ENCODE measurements at regions of chr20 and their contacts with region 1.

Region 1: DNA sequence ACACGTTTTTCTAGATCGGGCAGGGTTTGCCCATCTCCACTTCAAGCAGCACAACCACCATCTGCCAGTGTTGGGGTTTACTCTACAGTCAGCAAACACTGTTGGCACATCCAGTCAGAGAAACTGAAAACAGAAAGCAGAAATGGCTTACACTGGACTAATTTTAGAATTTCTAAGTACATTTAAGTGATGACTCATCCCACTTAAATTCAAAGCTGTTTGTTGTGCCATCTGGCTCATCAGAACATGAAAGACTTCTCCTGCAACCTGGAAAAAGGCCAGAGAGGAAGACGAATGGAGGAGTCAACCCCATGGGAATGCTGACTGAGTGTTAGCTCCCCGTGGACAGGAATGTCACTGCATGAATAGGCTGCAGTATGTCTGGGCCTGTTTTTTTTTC is 21.8 kb downstream of the FAM209B start:
- DNase-seq: peak; percentile 95
- H3K4me3 ChIP-seq: no peak overlapping the region
- H3K27ac ChIP-seq: no peak overlapping the region
- H3K4me1 ChIP-seq: peaks cover 8% of the 10 kb centered on the region
- H3K27me3 ChIP-seq: peaks cover 12% of the 10 kb centered on the region
- CTCF ChIP-seq: no peak

Region 2: GRCh38 chr20:56069016-56069415 is 485.9 kb before region 1 on chr20:
- CTCF ChIA-PET with region 1: no interaction called
- POLR2A ChIA-PET with region 1: no interaction called
- intact Hi-C with region 1: no loop called
- DNase-seq: no peak
- H3K4me3 ChIP-seq: no peak overlapping the region
- H3K27ac ChIP-seq: no peak overlapping the region
- H3K4me1 ChIP-seq: no peaks in the 10 kb centered on the region
- H3K27me3 ChIP-seq: no peaks in the 10 kb centered on the region
- CTCF ChIP-seq: no peak

Region 3: DNA sequence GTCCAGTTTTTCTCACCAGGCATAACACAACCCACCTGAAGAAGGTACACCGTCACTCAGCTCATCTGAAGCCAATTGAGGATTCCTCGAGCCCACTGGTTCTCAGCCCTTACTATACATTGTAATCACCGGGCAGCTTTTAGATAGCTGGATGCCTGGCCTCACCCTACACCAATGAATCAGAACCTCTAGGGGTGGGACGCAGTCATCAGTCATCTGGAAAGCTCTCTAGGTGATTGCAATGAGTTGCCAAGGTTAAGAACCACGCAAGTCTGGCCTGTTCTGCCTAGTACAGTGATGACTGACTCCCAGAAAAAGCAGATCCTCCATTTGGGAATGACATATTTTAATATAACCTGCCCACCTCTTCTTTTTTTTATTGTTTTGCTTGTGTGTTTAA is 265.2 kb before region 1 on chr20:
- CTCF ChIA-PET with region 1: no interaction called
- POLR2A ChIA-PET with region 1: no interaction called
- intact Hi-C with region 1: no loop called
- DNase-seq: no peak
- H3K4me3 ChIP-seq: no peak overlapping the region
- H3K27ac ChIP-seq: no peak overlapping the region
- H3K4me1 ChIP-seq: no peaks in the 10 kb centered on the region
- H3K27me3 ChIP-seq: peaks cover 3% of the 10 kb centered on the region
- CTCF ChIP-seq: no peak

Region 4: GRCh38 chr20:56629670-56630478 is 75.0 kb after region 1 on chr20:
- CTCF ChIA-PET with region 1: no interaction called
- POLR2A ChIA-PET with region 1: no interaction called
- intact Hi-C with region 1: loop called (anchors 5 kb)
- DNase-seq: peak; percentile 49
- H3K4me3 ChIP-seq: peak overlapping the region; percentile 38
- H3K27ac ChIP-seq: no peak overlapping the region
- H3K4me1 ChIP-seq: peaks cover 13% of the 10 kb centered on the region
- H3K27me3 ChIP-seq: peaks cover 100% of the 10 kb centered on the region
- CTCF ChIP-seq: peak; percentile 57

Region 5: GRCh38 chr20:56683080-56683847 is 128.4 kb after region 1 on chr20:
- CTCF ChIA-PET with region 1: no interaction called
- POLR2A ChIA-PET with region 1: no interaction called
- intact Hi-C with region 1: no loop called
- DNase-seq: no peak
- H3K4me3 ChIP-seq: no peak overlapping the region
- H3K27ac ChIP-seq: no peak overlapping the region
- H3K4me1 ChIP-seq: no peaks in the 10 kb centered on the region
- H3K27me3 ChIP-seq: peaks cover 4% of the 10 kb centered on the region
- CTCF ChIP-seq: no peak

Region 6: GRCh38 chr20:56788040-56788983 is 233.4 kb after region 1 on chr20:
- CTCF ChIA-PET with region 1: no interaction called
- POLR2A ChIA-PET with region 1: no interaction called
- intact Hi-C with region 1: no loop called
- DNase-seq: no peak
- H3K4me3 ChIP-seq: no peak overlapping the region
- H3K27ac ChIP-seq: no peak overlapping the region
- H3K4me1 ChIP-seq: no peaks in the 10 kb centered on the region
- H3K27me3 ChIP-seq: peaks cover 12% of the 10 kb centered on the region
- CTCF ChIP-seq: no peak

Region 7: DNA sequence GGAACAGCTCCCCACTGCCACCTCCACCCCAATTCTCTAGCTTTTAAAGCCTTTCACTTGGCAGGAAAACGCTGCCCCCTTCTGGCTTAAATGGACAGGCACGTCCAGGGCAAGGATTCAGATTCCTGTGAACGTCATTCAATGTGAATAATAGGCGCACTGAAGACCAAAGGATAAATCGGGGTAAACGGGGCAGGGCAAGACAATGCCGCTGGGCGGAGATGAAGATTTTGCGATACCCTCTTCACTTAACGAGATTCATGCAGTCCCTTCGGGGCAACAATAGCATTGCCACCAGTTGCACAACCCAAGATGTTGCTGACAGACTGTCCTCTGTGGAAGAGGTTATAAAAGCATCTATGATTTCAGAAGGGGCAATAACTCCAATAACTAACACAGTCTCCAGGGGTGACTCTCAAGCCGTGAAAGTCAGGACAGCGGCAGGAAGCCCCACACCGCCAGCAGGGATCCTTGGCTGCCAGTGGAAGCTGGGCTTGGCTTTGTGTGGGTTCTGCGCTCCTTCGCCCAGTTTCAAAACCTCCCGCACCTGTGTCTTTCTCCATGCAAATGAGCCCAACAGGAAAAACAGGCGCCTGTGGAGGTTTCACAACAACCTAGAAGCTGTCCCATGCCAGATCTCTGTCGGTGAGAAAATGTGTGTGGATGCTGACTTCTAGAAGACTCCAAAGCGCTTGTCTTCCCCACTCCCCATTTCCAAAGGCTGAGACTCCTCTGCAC is 419.8 kb after region 1 on chr20:
- CTCF ChIA-PET with region 1: no interaction called
- POLR2A ChIA-PET with region 1: no interaction called
- intact Hi-C with region 1: loop called (anchors 2 kb)
- DNase-seq: peak; percentile 61
- H3K4me3 ChIP-seq: no peak overlapping the region
- H3K27ac ChIP-seq: no peak overlapping the region
- H3K4me1 ChIP-seq: no peaks in the 10 kb centered on the region
- H3K27me3 ChIP-seq: peaks cover 79% of the 10 kb centered on the region
- CTCF ChIP-seq: peak; percentile 76

Region 8: GRCh38 chr20:57061058-57061900 is 506.4 kb after region 1 on chr20:
- CTCF ChIA-PET with region 1: no interaction called
- POLR2A ChIA-PET with region 1: no interaction called
- intact Hi-C with region 1: loop called (anchors 5 kb)
- DNase-seq: peak; percentile 50
- H3K4me3 ChIP-seq: no peak overlapping the region
- H3K27ac ChIP-seq: no peak overlapping the region
- H3K4me1 ChIP-seq: no peaks in the 10 kb centered on the region
- H3K27me3 ChIP-seq: peaks cover 49% of the 10 kb centered on the region
- CTCF ChIP-seq: peak; percentile 63

Region 9: GRCh38 chr20:57351042-57351783 is 796.3 kb after region 1 on chr20 and contains the start of gene RAE1:
- CTCF ChIA-PET with region 1: no interaction called
- POLR2A ChIA-PET with region 1: no interaction called
- intact Hi-C with region 1: loop called (anchors 5 kb)
- DNase-seq: peak; percentile 96
- H3K4me3 ChIP-seq: peak within 1 kb of the TSS; percentile 84
- H3K27ac ChIP-seq: peak within 1 kb of the TSS; percentile 93
- H3K4me1 ChIP-seq: no peaks in the 10 kb centered on the region
- H3K27me3 ChIP-seq: no peaks in the 10 kb centered on the region
- CTCF ChIP-seq: no peak
- total RNA-seq, gene RAE1: 59.4 and 70.9 TPM in 2 replicates

Measured in A673 (cell line).